Left cardiac atrium (tissue), 4 donors: ENCODE measurements at regions of chr7 and their contacts with region 1.

Region 1: GRCh38 chr7:125670926-125671572 is 741.4 kb upstream of the POT1 start:
- DNase-seq: no peak
- ATAC-seq: no peak

Region 2: DNA sequence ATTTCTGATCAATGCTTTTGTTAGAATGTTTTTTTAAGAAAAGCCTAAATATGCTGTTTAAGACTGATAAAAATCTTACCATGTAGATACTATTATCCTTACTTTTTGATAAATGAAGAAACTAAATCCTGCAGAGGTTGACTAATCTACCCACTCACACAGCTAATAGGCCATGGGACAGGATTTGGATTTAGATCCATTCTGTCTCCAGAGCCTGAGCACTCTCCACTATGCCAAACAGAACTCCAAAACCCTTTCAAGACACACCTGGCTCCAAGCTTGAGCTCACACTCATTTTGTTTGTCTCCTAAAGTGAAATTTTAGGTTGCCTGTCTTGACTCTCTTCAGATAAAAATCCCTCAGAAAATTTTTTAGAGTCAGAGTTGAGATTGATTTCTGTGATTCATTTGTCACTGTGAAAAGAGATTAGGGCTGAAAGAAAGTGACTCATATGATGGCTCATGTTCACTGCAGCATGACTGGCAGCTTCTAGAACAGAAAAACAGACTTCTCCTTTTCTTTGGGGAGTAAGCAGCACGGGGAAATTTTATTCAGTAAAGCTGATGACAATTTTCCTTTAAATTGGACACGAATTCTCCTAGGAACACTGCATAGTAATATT is 609.2 kb before region 1 on chr7:
- intact Hi-C with region 1: loop called in 1 of 2 experiments (anchors 5 kb)
- DNase-seq: no peak
- ATAC-seq: peak in 1 of 2 donors; percentile 63

Region 3: GRCh38 chr7:125241548-125241947 is 429.5 kb before region 1 on chr7:
- intact Hi-C with region 1: no loop called
- DNase-seq: no peak
- ATAC-seq: no peak